Aorta (tissue), 5 donors: ENCODE measurements at regions of chr9 and their contacts with region 1.

Region 1: GRCh38 chr9:97900738-97901565 is 21.3 kb downstream of the TRMO start:
- DNase-seq: no peak
- ATAC-seq: no peak
- H3K4me3 ChIP-seq: no peak overlapping the region
- H3K27ac ChIP-seq: no peak overlapping the region
- H3K4me1 ChIP-seq: no peaks in the 10 kb centered on the region
- H3K27me3 ChIP-seq: no peaks in the 10 kb centered on the region

Region 2: GRCh38 chr9:97710356-97711222 is 190.4 kb before region 1 on chr9:
- intact Hi-C with region 1: loop called (anchors 2 to 5 kb)
- DNase-seq: peak in 1 of 2 donors; percentile 48
- ATAC-seq: peak; percentile 81
- H3K4me3 ChIP-seq: no peak overlapping the region
- H3K27ac ChIP-seq: no peak overlapping the region
- H3K4me1 ChIP-seq: no peaks in the 10 kb centered on the region
- H3K27me3 ChIP-seq: no peaks in the 10 kb centered on the region